Gastrocnemius medialis (tissue), 4 donors: ENCODE measurements at regions of chr1 and their contacts with region 1.

Region 1: GRCh38 chr1:51627678-51628077 is 10.8 kb downstream of the OSBPL9 start:
- DNase-seq: no peak
- ATAC-seq: no peak
- H3K4me3 ChIP-seq: no peak overlapping the region
- H3K27ac ChIP-seq: peak overlapping the region; percentile 94 to 99 (median 99)
- H3K4me1 ChIP-seq: peaks cover 74 to 92% of the 10 kb centered on the region in 2 donors
- H3K27me3 ChIP-seq: no peaks in the 10 kb centered on the region
- CTCF ChIP-seq: peak in 3 of 5 experiments; percentile 12 to 22 (median 21)
- POLR2A ChIP-seq: no peak

Region 2: DNA sequence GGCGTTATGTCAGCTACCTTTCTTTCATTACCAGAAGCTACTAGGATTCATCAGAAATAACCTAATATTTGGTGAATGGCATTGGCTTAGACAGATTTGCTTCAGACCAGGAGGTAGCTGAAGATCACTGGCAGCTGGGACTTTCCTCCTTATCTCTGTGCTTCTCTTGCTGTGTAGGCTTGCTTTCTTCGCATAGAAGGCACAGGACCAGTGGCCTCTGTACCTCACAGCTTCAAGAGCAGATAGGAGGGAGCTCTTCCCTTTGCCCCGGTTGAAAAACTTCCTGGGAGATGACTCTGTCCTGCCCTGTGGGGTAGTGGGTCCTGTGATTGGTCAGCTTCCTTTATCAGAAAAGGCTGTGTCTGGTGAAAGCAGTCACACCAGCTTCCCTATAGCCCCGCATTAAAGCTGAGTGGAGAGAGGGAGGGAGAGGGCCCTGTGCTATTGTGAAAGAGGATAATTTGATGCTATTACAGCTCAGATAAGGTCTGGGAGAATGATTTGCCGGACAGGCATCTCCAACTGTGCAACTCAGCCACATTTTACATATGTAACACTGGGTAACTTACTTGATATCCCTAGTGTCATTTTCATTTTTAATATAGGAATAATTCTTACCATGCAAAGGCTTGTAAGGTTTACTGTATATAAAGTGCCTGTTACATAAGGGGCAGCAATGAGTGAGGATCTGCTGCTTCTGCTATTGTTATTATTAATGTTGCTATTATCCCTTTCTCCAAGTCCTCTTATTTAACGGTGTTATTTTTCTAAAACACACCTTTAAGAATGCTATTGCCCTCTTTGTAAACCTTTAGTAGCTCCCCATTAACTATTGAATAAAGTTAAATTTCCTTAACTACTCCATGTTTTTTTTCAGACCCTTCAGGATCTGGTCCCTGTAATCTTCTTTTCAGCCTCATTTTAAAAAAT is 20.8 kb after region 1 on chr1:
- in situ Hi-C with region 1: no loop called
- intact Hi-C with region 1: no loop called
- DNase-seq: no peak
- ATAC-seq: peak; percentile 61 to 79
- H3K4me3 ChIP-seq: peak overlapping the region in 1 of 4 donors; percentile 11
- H3K27ac ChIP-seq: peak overlapping the region; percentile 75 to 99 (median 82)
- H3K4me1 ChIP-seq: peaks cover 83 to 85% of the 10 kb centered on the region in 2 donors
- H3K27me3 ChIP-seq: no peaks in the 10 kb centered on the region
- CTCF ChIP-seq: no peak
- POLR2A ChIP-seq: no peak

Region 3: DNA sequence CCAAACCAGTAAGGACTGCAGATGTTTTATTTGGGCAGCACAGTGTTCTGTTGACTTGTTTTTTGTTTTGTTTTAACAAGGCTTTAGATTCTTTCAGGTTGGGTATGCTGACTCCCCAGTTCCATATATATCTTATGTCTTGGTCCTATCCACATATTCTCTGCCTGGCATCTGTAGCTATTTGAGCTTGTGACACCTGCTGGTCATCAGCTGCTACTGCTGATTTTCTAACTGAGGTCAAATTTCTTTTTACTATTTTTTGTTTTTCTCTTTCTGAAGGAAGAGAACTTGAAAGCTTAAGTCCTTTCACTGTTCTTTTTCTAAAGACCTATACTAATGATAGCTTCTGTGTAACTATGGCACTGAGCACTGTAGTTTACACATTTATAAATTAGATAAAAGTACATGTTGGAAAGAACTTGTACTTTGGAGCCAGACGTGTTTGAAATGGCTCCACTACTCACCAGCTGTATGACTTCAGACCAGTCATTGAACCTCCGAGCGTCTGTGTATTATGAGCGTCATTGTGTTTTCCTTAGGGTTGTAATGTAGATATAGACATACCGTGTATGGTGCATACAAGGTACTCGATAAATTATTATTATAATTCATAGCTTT is 141.4 kb after region 1 on chr1:
- in situ Hi-C with region 1: loop called in 3 of 4 experiments (anchors 10 to 25 kb)
- intact Hi-C with region 1: loop called (anchors 2 kb)
- DNase-seq: no peak
- ATAC-seq: peak; percentile 76 to 83
- H3K4me3 ChIP-seq: no peak overlapping the region
- H3K27ac ChIP-seq: peak overlapping the region; percentile 48 to 60 (median 56)
- H3K4me1 ChIP-seq: peaks cover 0 to 8% of the 10 kb centered on the region in 2 donors
- H3K27me3 ChIP-seq: no peaks in the 10 kb centered on the region
- CTCF ChIP-seq: peak; percentile 66 to 80 (median 72)
- POLR2A ChIP-seq: no peak

Region 4: GRCh38 chr1:51776408-51776807 is 148.7 kb after region 1 on chr1:
- in situ Hi-C with region 1: loop called in 3 of 4 experiments (anchors 10 to 25 kb)
- intact Hi-C with region 1: no loop called
- DNase-seq: no peak
- ATAC-seq: no peak
- H3K4me3 ChIP-seq: no peak overlapping the region
- H3K27ac ChIP-seq: no peak overlapping the region
- H3K4me1 ChIP-seq: no peaks in the 10 kb centered on the region
- H3K27me3 ChIP-seq: no peaks in the 10 kb centered on the region
- CTCF ChIP-seq: no peak
- POLR2A ChIP-seq: no peak

Region 5: DNA sequence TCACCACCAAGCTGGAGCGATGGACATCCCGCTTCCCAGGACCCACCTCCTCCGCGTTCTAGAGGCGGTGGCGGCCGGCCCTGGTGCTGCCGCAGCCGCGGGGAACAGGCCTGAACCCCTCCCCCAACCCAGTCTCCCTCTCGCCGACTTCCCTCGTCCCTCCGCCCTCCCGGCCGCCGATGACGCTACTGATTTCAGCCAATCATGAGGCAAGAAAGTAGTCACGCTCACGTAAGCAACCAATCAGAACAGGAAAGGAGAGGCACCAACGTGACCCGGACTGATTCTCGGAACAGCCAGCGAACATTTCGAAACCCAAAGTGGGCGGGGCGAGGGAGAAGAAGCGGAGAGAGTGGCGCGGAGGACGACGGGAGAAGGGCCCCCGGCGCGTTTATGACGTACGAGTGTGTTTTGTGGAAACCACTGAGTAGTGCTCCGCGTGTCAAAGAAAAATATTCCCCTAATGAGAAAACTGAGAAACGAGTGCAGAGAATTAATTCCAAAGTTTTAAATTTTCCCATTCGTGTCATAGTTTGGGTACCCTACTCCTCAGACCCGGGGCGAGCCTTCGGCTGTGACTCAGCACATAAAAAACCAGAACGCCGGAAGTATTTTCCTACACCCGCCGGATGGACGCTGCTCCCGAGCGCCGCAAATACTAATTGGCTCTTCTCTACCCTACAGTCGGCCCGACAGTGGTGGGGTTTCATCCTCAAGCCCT is 251.1 kb after region 1 on chr1 and contains the start of gene NRDC:
- in situ Hi-C with region 1: no loop called
- intact Hi-C with region 1: no loop called
- DNase-seq: peak; percentile 100
- ATAC-seq: peak; percentile 97 to 98
- H3K4me3 ChIP-seq: peak within 1 kb of the TSS; percentile 64 to 99 (median 90)
- H3K27ac ChIP-seq: peak within 1 kb of the TSS; percentile 93 to 99 (median 96)
- H3K4me1 ChIP-seq: peaks cover 35 to 41% of the 10 kb centered on the region in 2 donors
- H3K27me3 ChIP-seq: peaks cover 0 to 20% (median 10%) of the 10 kb centered on the region in 3 donors
- CTCF ChIP-seq: peak in 1 of 5 experiments; percentile 37
- POLR2A ChIP-seq: peak; percentile 97 to 98
- total RNA-seq, gene NRDC: 180 to 270 (median 239) TPM